ENCODE measurements at regions of chr22 and their contacts with region 1.

Region 1: GRCh38 chr22:28594797-28595462 is 84.7 kb downstream of the TTC28 start:
- DNase-seq: no peak
- H3K4me3 ChIP-seq: no peak overlapping the region
- H3K27ac ChIP-seq: no peak overlapping the region
- H3K4me1 ChIP-seq: no peaks in the 10 kb centered on the region
- H3K27me3 ChIP-seq: no peaks in the 10 kb centered on the region
- CTCF ChIP-seq: peak; percentile 52 to 89 (median 88)
- POLR2A ChIP-seq: no peak

Region 2: DNA sequence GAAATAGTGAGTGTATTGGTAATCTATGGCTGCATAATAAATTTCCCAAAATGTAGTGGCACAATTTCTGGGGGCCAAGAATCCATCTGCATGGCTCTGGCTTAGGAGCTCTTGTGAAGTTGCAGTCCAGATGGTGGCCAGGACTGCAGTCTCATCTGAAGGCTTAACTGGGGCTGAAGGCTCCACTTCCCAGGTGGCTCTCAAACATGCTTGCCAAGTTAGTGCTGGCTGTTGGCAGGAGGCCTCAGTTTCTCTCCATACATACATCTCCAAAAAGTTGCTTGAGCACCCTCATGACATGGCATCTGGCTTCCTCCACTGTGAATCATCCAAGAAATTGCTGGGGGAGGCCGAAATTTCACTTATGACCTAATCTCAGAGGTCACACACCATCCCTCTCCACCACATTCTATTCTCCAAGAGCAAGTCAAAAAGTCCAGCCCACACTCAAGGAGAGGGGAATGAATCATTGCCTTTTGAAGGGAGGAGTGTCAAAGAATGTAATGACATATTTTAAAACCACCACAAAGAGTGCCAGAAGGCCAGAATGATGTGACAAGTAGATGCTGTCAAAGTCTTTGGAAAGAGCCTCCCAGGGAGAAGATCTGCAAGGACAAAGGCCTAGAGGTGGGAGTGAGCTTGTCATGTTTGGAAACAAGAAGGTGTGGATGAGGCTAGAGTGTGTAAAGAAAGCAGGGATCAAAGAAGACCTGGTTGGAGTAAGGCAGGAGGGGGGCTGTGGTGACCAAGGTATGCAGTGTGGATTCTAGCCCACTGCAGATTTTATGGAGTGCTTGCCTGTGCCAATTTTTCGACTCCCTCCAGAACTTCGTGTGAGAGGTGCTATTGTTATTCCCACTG is 1371.4 kb before region 1 on chr22:
- intact Hi-C with region 1: no loop called
- DNase-seq: no peak
- H3K4me3 ChIP-seq: no peak overlapping the region
- H3K27ac ChIP-seq: no peak overlapping the region
- H3K4me1 ChIP-seq: no peaks in the 10 kb centered on the region
- H3K27me3 ChIP-seq: no peaks in the 10 kb centered on the region
- CTCF ChIP-seq: no peak
- POLR2A ChIP-seq: no peak

Region 3: GRCh38 chr22:28019881-28020871 is 574.8 kb before region 1 on chr22:
- intact Hi-C with region 1: loop called (anchors 10 kb)
- DNase-seq: peak in 1 of 2 donors; percentile 76
- H3K4me3 ChIP-seq: no peak overlapping the region
- H3K27ac ChIP-seq: peak overlapping the region in 1 of 2 donors; percentile 58
- H3K4me1 ChIP-seq: no peaks in the 10 kb centered on the region
- H3K27me3 ChIP-seq: no peaks in the 10 kb centered on the region
- CTCF ChIP-seq: peak; percentile 82 to 93 (median 89)
- POLR2A ChIP-seq: no peak

Region 4: GRCh38 chr22:28647216-28647615 is 52.3 kb after region 1 on chr22:
- intact Hi-C with region 1: no loop called
- DNase-seq: no peak
- H3K4me3 ChIP-seq: no peak overlapping the region
- H3K27ac ChIP-seq: no peak overlapping the region
- H3K4me1 ChIP-seq: no peaks in the 10 kb centered on the region
- H3K27me3 ChIP-seq: no peaks in the 10 kb centered on the region
- CTCF ChIP-seq: no peak
- POLR2A ChIP-seq: no peak

Region 5: GRCh38 chr22:28670161-28670560 is 75.2 kb after region 1 on chr22:
- intact Hi-C with region 1: no loop called
- DNase-seq: no peak
- H3K4me3 ChIP-seq: no peak overlapping the region
- H3K27ac ChIP-seq: no peak overlapping the region
- H3K4me1 ChIP-seq: no peaks in the 10 kb centered on the region
- H3K27me3 ChIP-seq: no peaks in the 10 kb centered on the region
- CTCF ChIP-seq: no peak
- POLR2A ChIP-seq: no peak

Measured in breast epithelium (tissue), 4 donors.